Activated CD4-positive, alpha-beta T cell treated with anti-CD3 and anti-CD28 coated beads, Interleukin-2, amount 10 ng/mL, durations not matched to agents 24 days and 14 days (primary cell): ENCODE measurements at regions of chr22 and their contacts with region 1.

Region 1: DNA sequence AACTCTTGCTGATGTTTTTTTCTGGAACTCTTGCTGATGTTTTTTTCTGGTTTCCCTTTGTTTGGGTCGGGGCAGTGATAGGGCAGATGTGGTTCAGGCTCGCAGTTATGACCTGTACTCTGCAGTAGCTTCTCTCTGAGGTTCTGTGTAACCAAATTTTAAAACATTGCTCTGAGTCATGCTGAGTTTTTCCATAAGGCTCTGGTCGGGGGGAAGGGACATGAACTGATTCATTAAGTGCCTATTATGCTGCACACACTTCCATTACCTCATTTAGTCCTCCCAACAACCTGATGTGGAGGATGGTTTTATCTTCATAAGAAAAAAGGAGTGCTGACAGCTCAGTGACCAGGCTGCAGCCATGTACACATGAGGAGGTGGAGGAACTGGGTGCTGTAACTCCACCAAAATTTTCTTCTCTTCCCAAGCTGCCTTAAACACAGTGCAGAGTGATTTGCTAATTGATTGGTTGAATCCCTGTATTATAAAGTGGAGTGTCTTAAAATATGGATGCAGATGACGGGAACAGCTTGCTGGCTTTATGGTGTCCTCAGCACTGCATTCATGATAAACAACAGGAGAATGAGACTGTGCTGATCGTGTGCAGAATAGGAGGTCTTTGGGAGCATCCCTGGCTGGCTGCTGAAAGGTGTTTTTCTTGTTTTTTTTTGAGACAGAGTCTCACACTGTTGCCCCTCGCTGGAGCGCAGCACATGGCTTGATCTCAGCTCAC is 19.1 kb downstream of the TNRC6B start:
- DNase-seq: no peak
- H3K4me3 Mint-ChIP-seq: peak overlapping the region; percentile 48
- H3K27ac Mint-ChIP-seq: peak overlapping the region; percentile 85
- H3K4me1 Mint-ChIP-seq: peaks cover 45% of the 10 kb centered on the region
- H3K27me3 Mint-ChIP-seq: no peaks in the 10 kb centered on the region

Region 2: GRCh38 chr22:40243891-40244290 is 47.1 kb after region 1 on chr22:
- intact Hi-C with region 1: loop called (anchors 2 kb)
- DNase-seq: peak; percentile 72
- H3K4me3 Mint-ChIP-seq: peak overlapping the region; percentile 60
- H3K27ac Mint-ChIP-seq: peak overlapping the region; percentile 42
- H3K4me1 Mint-ChIP-seq: peaks cover 57% of the 10 kb centered on the region
- H3K27me3 Mint-ChIP-seq: no peaks in the 10 kb centered on the region

Region 3: GRCh38 chr22:40250608-40251007 is 53.8 kb after region 1 on chr22:
- intact Hi-C with region 1: loop called (anchors 2 kb)
- DNase-seq: no peak
- H3K4me3 Mint-ChIP-seq: no peak overlapping the region
- H3K27ac Mint-ChIP-seq: peak overlapping the region; percentile 59
- H3K4me1 Mint-ChIP-seq: peaks cover 43% of the 10 kb centered on the region
- H3K27me3 Mint-ChIP-seq: no peaks in the 10 kb centered on the region

Region 4: DNA sequence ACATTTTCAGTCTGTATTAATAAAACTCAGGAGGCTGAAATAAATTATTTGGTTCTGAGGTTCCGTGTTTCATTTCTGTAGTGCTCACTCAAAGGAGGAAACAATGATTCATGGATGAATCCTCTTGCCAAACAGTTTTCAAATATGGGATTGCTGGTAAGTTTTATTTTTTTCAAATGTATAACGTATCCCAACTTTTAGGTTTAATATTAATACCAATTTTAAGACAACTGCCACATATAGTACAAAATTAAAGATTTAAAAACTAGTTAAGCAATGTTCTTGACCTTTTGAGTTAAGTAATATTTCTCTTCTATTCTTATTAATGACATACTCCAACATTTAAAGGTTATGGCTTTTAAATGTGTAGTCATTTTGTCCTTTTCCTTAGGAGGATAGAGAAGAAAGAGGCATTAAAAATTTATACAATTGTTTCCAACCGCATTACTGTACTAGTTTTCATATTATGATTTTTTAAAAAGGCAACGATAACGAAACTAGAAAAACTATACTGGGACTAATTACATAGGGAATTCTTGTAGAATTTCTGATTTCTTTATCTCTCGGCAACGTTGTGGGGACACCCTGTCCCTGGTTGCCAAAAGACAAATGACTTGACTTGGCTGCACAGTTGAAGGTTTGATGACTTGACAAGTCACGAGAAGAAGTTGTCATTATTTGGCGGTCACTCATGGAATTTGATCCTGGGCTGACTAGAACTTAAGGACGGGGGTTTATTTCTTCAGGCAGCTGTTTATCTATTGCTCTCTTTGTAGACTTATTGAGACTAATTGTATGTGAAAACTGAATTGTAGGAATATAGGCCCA is 80.4 kb after region 1 on chr22:
- intact Hi-C with region 1: loop called (anchors 1 kb)
- DNase-seq: no peak
- H3K4me3 Mint-ChIP-seq: no peak overlapping the region
- H3K27ac Mint-ChIP-seq: peak overlapping the region; percentile 9
- H3K4me1 Mint-ChIP-seq: peaks cover 25% of the 10 kb centered on the region
- H3K27me3 Mint-ChIP-seq: no peaks in the 10 kb centered on the region